Aorta (tissue), 5 donors: ENCODE measurements at regions of chr5 and their contacts with region 1.

Region 1: GRCh38 chr5:97764700-97765099 is 581.7 kb upstream of the RIOK2 start:
- DNase-seq: no peak
- ATAC-seq: no peak
- H3K4me3 ChIP-seq: no peak overlapping the region
- H3K27ac ChIP-seq: no peak overlapping the region
- H3K4me1 ChIP-seq: no peaks in the 10 kb centered on the region
- H3K27me3 ChIP-seq: no peaks in the 10 kb centered on the region

Region 2: GRCh38 chr5:97151370-97151769 is 613.3 kb before region 1 on chr5:
- intact Hi-C with region 1: no loop called
- DNase-seq: no peak
- ATAC-seq: no peak
- H3K4me3 ChIP-seq: no peak overlapping the region
- H3K27ac ChIP-seq: no peak overlapping the region
- H3K4me1 ChIP-seq: no peaks in the 10 kb centered on the region
- H3K27me3 ChIP-seq: no peaks in the 10 kb centered on the region

Region 3: DNA sequence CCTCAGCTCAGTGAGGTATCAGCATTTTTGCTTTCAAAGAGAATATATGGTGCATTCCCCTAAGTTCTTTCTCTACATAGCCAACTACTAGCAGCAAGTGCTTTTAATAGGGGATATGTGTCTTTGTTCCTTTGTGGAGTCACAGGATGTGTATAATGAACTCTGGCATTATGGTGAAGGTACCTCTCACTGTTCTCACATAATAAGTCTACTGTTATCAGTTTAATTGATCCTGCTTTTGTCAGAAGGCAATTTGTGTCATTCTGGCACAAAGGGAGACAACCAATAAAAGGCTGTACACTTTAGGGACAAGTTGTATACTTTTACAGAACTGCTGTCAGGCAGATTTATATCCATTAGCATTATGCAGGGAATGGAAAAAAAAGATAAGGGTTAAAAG is 50.3 kb before region 1 on chr5:
- intact Hi-C with region 1: loop called in 1 of 2 experiments (anchors 2 kb)
- DNase-seq: no peak
- ATAC-seq: no peak
- H3K4me3 ChIP-seq: no peak overlapping the region
- H3K27ac ChIP-seq: no peak overlapping the region
- H3K4me1 ChIP-seq: no peaks in the 10 kb centered on the region
- H3K27me3 ChIP-seq: no peaks in the 10 kb centered on the region